ENCODE measurements at regions of chr7 and their contacts with region 1.

Region 1: DNA sequence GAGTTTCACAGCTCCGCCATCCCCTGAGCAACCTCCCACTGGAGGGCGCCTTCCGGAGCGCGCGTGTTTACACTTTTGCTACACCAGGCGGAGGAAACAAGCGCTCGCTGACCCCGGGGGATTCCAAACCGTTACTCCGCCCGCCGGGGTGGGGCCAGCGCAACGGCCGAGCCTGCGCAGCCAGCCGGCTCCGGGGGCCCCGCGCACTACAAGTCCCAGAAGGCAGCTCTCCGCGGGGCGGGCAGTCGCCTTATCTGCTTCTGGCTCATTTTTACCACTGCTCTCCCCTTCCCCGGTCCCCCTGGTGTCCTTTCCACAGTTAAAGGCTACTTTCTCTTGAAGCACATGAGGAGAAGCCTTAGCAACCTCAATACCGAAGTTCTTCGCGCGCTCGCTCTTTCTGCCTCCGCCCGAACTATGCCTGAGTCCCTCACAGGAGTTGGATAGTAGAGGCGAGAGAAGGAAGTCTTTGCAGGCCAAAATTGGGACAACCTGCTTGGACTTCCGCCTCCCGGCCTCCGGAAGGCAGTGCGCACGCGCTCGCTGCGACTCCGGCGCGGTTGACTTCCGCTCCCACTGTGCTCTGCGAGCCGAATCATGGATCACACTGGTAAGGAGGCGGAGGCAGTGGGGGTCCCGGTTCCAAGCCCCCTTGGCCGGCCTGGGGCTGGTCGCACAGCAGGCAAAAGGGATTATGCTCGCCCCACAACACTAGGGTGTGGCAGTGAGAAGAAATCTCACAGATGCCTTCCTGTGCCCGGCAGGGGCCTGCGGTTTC is at the start of gene CBLL1:
- DNase-seq: peak; percentile 98
- H3K4me3 Mint-ChIP-seq: peak within 1 kb of the TSS; percentile 96
- H3K27ac Mint-ChIP-seq: peak within 1 kb of the TSS; percentile 100
- H3K4me1 Mint-ChIP-seq: peaks cover 33% of the 10 kb centered on the region
- H3K27me3 Mint-ChIP-seq: peaks cover 4% of the 10 kb centered on the region
- total RNA-seq, gene CBLL1: 39.1 and 43.7 TPM in 2 replicates

Region 2: DNA sequence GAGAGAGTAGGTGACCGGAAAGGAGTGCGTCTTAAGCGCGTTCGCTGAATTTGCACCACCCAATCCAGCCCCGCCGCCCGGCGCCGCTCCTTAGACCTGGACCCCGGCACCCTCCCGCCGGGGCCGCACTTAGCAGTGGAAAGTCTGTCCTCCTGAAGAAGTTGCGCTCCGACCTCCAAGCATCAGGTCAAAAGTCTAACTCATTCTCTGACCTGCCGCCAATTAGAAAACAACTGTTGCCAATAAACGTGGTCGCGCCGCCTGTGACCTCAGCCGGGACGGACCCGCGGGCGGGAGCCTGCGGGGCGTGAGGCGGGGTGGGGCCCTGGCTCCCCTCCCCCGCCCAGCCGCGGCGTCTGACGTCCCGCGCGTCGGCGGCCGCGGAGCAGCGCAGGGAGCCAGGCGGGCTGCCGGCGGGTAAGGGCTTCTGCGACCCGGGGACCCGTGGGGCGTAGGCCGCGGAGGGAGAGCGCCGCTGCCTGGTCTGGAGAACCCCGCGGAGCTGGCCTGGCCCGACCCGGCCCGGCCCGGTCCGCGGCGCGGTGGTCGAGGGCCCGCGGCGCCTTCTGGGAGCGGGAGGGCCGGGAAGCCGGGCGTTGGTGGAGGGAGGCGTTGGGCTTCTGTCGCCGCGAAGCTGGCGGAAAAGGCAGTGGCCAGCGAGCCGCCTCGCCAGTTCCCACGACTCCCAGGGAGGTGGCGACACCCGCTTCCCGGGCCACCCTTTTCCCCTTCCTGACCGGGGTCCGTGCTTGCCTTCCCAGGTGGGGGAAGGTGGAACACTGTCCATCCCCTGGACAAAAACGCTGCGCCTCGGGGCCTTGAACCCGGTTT is 163.7 kb before region 1 on chr7 and contains the start of gene BCAP29:
- intact Hi-C with region 1: loop called (anchors 5 kb)
- DNase-seq: peak; percentile 68
- H3K4me3 Mint-ChIP-seq: peak within 1 kb of the TSS; percentile 90
- H3K27ac Mint-ChIP-seq: peak within 1 kb of the TSS; percentile 85
- H3K4me1 Mint-ChIP-seq: peaks cover 27% of the 10 kb centered on the region
- H3K27me3 Mint-ChIP-seq: no peaks in the 10 kb centered on the region
- total RNA-seq, gene BCAP29: 46.6 and 52.0 TPM in 2 replicates

Region 3: DNA sequence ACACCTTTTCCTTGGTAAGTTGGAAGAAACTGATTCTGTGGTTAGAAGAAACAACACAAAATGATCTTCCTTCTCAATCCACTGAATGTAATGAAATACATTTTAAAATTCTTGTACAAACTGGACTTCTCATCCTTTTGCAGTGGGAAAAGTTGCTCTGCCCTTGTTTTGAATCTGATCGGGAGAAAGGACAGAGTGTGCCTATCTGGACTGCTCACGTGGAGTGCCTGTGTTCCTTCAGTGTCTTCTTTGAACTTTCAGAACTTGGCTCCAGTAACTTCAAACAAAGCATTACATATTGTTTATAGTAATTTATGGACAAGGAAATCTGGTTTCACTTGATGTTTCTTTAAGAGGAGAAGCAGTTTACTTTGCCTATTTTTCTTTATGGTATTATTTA is 42.2 kb after region 1 on chr7:
- intact Hi-C with region 1: no loop called
- DNase-seq: no peak
- H3K4me3 Mint-ChIP-seq: no peak overlapping the region
- H3K27ac Mint-ChIP-seq: no peak overlapping the region
- H3K4me1 Mint-ChIP-seq: peaks cover 11% of the 10 kb centered on the region
- H3K27me3 Mint-ChIP-seq: peaks cover 8% of the 10 kb centered on the region

Region 4: DNA sequence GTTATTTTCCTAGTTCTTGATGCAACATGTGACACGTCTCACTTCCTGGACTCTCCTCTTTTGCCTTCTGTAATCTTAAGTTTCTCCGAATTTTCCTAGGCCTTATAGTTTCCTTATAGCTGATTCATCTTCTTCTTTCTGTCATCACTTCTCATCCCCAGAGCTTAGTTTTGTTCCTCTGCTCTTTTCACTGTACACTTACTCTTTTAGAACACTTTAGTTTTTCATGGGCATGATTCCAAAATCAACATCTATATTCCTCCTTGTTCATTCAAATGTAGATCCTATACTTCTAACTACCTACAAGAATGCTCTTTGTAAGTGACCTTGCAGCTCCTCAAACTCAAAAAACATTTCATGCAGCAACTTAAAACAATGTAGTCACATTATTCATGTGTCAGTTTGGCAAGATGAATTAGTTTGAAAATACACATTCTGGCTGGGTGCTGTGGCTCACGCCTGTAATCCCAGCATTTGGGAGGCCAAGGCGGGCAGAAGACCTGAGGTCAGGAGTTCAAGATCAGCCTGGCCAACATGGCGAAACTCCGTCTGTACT is 72.3 kb after region 1 on chr7:
- intact Hi-C with region 1: loop called (anchors 1 kb)
- DNase-seq: no peak
- H3K4me3 Mint-ChIP-seq: no peak overlapping the region
- H3K27ac Mint-ChIP-seq: peak overlapping the region; percentile 75
- H3K4me1 Mint-ChIP-seq: peaks cover 21% of the 10 kb centered on the region
- H3K27me3 Mint-ChIP-seq: peaks cover 2% of the 10 kb centered on the region

Region 5: DNA sequence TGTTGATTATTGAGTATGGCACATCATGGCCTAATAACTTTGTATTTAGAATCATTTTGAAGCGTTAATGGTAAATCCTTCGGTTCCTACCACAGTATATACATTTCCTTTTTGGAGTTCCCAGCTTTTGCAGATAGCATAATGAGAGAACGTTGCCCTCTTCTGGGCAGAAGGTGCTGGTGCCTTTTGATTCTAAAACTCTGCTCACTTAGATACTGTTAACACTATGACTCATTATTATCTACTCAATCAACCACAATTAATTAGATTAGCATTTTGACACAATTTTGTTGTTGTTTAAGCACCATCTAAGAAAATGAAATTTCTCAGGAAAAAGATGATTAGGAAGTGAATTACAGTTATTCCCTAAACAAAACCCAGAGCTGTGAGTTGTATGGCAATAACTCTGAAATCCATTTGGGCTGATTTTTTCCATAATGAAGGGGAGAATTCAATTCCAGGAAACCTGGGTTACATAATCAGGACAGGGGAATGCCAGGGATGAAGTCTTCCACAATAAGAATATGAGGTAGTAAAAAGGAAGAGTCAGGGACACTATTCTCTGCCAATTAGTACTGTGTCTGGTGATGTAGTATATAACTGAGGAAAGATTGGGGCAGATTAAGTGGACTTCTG is 135.8 kb after region 1 on chr7:
- intact Hi-C with region 1: loop called (anchors 1 kb)
- DNase-seq: no peak
- H3K4me3 Mint-ChIP-seq: no peak overlapping the region
- H3K27ac Mint-ChIP-seq: no peak overlapping the region
- H3K4me1 Mint-ChIP-seq: peaks cover 27% of the 10 kb centered on the region
- H3K27me3 Mint-ChIP-seq: peaks cover 29% of the 10 kb centered on the region

Region 6: DNA sequence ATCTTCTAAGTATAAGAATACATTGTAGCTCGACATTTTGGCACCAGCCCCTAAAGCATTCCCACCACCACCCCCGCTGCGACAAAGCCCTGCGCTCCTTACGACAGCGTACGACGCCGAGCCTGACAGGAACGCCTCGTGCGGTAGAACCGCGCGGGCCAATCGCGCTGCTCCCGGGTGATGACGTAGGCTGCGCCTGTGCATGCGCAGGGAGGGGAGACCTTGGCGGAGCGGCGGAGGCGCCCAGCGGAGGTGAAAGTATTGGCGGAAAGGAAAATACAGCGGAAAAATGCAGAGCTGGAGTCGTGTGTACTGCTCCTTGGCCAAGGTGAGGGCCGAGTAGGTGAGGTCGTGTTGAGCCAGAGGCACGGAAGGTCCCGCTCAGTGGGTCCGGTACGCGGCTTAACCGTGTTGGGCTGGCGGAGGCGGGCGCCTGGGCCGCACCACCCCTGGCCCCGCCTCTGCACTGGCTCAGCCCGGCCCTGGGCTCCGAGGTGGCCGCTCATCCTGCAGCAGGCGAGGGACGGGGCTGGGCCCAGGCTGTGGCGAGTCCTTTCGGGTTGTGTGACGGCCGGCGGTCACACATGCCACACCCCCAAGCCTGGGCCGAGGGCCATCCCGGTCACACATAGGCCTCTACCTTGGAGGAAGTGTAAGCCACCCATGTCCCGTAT is 147.3 kb after region 1 on chr7 and contains the start of gene DLD:
- intact Hi-C with region 1: loop called (anchors 1 kb)
- DNase-seq: peak; percentile 92
- H3K4me3 Mint-ChIP-seq: peak within 1 kb of the TSS; percentile 93
- H3K27ac Mint-ChIP-seq: peak within 1 kb of the TSS; percentile 99
- H3K4me1 Mint-ChIP-seq: peaks cover 45% of the 10 kb centered on the region
- H3K27me3 Mint-ChIP-seq: no peaks in the 10 kb centered on the region
- total RNA-seq, gene DLD: 104 and 108 TPM in 2 replicates

Region 7: GRCh38 chr7:108045154-108045553 is 301.4 kb after region 1 on chr7:
- intact Hi-C with region 1: no loop called
- DNase-seq: no peak
- H3K4me3 Mint-ChIP-seq: no peak overlapping the region
- H3K27ac Mint-ChIP-seq: no peak overlapping the region
- H3K4me1 Mint-ChIP-seq: no peaks in the 10 kb centered on the region
- H3K27me3 Mint-ChIP-seq: peaks cover 21% of the 10 kb centered on the region

Measured in activated T-helper 2 cell treated with anti-CD3 and anti-CD28 coated beads, Interferon-gamma antibody, Interleukin-2, Interleukin-4, amounts not matched to agents 10 μg/mL and 5 μg/mL and 100 μg/mL, durations not matched to agents 14 hours and 24 hours and 36 hours (primary cell).